Naive thymus-derived CD8-positive, alpha-beta T cell (primary cell): ENCODE measurements at regions of chr15 and their contacts with region 1.

Region 1: GRCh38 chr15:38690689-38691332 is 126.2 kb upstream of the RASGRP1 start:
- DNase-seq: peak; percentile 72 to 87 (median 79)
- ATAC-seq: peak; percentile 24 to 26
- H3K4me3 Mint-ChIP-seq: peak overlapping the region in 6 of 10 donors; percentile 0 to 60 (median 44)
- H3K27ac Mint-ChIP-seq: peak overlapping the region in 9 of 10 donors; percentile 40 to 97 (median 87)
- H3K4me1 Mint-ChIP-seq: peaks cover 36 to 72% (median 64%) of the 10 kb centered on the region in 4 donors
- H3K27me3 Mint-ChIP-seq: no peaks in the 10 kb centered on the region

Region 2: DNA sequence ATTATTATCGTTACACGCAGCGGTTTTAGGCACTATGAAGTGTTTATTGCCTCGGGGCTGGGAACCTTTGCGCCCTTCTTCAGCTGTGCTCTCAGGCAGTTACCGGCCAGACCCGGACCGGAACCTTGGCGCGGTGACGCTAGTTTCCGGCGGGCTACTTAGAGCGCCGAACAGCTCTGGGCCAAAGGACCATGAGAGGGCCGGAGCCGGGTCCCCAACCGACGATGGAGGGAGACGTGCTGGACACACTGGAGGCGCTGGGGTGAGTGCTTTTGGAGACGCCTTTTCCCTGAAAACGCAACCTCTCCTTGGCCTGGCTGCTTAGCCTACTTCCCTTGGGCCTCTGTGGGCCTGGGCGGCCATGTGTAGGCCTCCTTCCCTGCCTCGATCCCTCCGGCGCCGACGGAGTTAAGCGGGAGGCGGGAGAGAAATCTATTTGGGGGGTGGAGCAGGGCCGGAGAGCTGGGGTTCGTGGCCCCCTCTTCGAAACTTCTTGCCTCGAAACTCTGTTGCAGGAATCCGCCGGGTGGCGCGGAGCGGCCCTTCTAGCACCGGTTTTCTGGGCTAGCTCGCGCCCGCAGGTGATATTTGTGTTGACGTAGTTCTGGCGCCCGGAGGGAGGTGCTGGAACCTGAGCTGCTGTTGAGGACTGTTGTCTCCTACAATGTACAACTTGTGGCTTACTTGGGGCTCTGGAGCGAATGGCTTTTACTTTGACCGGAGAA is 236.7 kb before region 1 on chr15 and contains the start of gene FAM98B:
- POLR2A ChIA-PET with region 1: interaction called, 15 read pairs
- DNase-seq: peak; percentile 65 to 90 (median 82)
- ATAC-seq: peak; percentile 87 to 91
- H3K4me3 Mint-ChIP-seq: peak within 1 kb of the TSS; percentile 95 to 99 (median 96)
- H3K27ac Mint-ChIP-seq: peak within 1 kb of the TSS; percentile 96 to 99 (median 98)
- H3K4me1 Mint-ChIP-seq: peaks cover 22 to 44% (median 39%) of the 10 kb centered on the region in 4 donors
- H3K27me3 Mint-ChIP-seq: no peaks in the 10 kb centered on the region
- polyA plus RNA-seq, gene FAM98B: 1.9 to 3.9 (median 3.2) TPM

Region 3: DNA sequence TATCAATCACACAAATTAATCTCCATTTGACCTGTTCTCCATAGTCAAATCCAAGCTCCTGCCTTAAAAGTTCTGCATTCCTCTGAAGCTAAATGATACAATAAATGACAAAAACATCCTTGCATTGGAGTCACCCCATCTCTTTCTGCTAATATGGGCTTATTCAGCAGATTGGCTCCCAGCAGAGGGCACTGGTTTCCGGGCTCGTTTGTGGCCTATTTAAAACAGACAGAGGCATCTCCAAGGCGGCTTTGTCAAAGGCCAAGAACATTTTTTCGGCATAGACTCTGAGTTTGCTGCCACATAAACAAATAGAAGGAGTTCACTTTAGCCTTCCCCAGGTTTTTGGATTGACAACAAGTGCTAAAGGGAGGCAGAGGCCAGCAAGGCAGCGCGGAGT is 78.2 kb after region 1 on chr15:
- POLR2A ChIA-PET with region 1: no interaction called
- DNase-seq: no peak
- ATAC-seq: no peak
- H3K4me3 Mint-ChIP-seq: no peak overlapping the region
- H3K27ac Mint-ChIP-seq: no peak overlapping the region
- H3K4me1 Mint-ChIP-seq: no peaks in the 10 kb centered on the region
- H3K27me3 Mint-ChIP-seq: peaks cover 6 to 27% (median 11%) of the 10 kb centered on the region in 5 donors